MCF 10A (cell line): ENCODE measurements at regions of chr1 and their contacts with region 1.

Region 1: GRCh38 chr1:59699227-59699847 is 115.4 kb upstream of the HOOK1 start:
- DNase-seq: peak; percentile 59
- H3K4me3 Mint-ChIP-seq: no peak overlapping the region
- H3K27ac Mint-ChIP-seq: peak overlapping the region; percentile 57
- H3K4me1 Mint-ChIP-seq: peaks cover 24% of the 10 kb centered on the region
- H3K27me3 Mint-ChIP-seq: no peaks in the 10 kb centered on the region
- CTCF ChIP-seq: peak; percentile 76

Region 2: GRCh38 chr1:58739856-58740466 is 959.4 kb before region 1 on chr1:
- CTCF ChIA-PET with region 1: interaction called, 19 read pairs
- POLR2A ChIA-PET with region 1: no interaction called
- intact Hi-C with region 1: loop called (anchors 1 kb)
- DNase-seq: peak; percentile 69
- H3K4me3 Mint-ChIP-seq: no peak overlapping the region
- H3K27ac Mint-ChIP-seq: no peak overlapping the region
- H3K4me1 Mint-ChIP-seq: peaks cover 6% of the 10 kb centered on the region
- H3K27me3 Mint-ChIP-seq: no peaks in the 10 kb centered on the region
- CTCF ChIP-seq: peak; percentile 54

Region 3: GRCh38 chr1:58922302-58923089 is 776.8 kb before region 1 on chr1:
- CTCF ChIA-PET with region 1: interaction called, 11 read pairs
- POLR2A ChIA-PET with region 1: no interaction called
- intact Hi-C with region 1: loop called (anchors 10 kb)
- DNase-seq: peak; percentile 91
- H3K4me3 Mint-ChIP-seq: peak overlapping the region; percentile 7
- H3K27ac Mint-ChIP-seq: peak overlapping the region; percentile 87
- H3K4me1 Mint-ChIP-seq: peaks cover 52% of the 10 kb centered on the region
- H3K27me3 Mint-ChIP-seq: no peaks in the 10 kb centered on the region
- CTCF ChIP-seq: no peak

Region 4: DNA sequence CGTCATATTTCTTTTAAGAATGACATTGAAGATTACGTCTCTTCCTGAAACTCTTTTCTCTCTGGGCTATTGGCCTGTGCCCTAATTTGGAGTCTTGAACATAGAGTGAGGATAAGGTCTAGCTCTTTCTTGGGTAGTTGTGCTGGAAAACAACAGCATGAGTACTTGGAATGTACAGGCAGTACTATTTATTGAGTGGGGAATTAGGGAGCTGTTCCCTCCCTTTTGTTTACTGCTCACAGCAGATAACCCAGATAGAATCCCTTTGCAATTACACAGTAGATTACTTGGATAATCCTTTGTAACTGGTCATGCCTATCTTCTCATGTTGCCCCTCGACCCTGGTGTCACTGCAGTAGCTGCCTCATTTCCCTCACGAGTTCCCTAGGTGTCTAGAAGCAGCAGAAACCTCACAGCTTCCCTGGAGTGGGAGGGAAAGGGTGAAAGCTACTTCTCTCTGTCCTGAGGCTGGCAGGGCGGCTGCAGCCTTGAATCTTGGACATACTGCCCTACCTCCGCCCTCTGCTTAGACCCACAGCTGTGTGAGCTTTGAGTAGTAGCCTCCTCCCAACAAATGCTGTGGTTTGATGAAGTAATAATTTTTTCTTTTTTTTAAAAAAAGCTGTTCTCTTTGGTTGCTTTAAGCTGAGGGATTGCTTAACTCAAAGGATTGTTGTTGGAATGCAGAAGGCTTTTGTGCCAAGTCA is 331.9 kb before region 1 on chr1:
- CTCF ChIA-PET with region 1: interaction called, 11 read pairs
- POLR2A ChIA-PET with region 1: no interaction called
- intact Hi-C with region 1: no loop called
- DNase-seq: peak; percentile 75
- H3K4me3 Mint-ChIP-seq: peak overlapping the region; percentile 35
- H3K27ac Mint-ChIP-seq: peak overlapping the region; percentile 86
- H3K4me1 Mint-ChIP-seq: peaks cover 42% of the 10 kb centered on the region
- H3K27me3 Mint-ChIP-seq: no peaks in the 10 kb centered on the region
- CTCF ChIP-seq: no peak

Region 5: DNA sequence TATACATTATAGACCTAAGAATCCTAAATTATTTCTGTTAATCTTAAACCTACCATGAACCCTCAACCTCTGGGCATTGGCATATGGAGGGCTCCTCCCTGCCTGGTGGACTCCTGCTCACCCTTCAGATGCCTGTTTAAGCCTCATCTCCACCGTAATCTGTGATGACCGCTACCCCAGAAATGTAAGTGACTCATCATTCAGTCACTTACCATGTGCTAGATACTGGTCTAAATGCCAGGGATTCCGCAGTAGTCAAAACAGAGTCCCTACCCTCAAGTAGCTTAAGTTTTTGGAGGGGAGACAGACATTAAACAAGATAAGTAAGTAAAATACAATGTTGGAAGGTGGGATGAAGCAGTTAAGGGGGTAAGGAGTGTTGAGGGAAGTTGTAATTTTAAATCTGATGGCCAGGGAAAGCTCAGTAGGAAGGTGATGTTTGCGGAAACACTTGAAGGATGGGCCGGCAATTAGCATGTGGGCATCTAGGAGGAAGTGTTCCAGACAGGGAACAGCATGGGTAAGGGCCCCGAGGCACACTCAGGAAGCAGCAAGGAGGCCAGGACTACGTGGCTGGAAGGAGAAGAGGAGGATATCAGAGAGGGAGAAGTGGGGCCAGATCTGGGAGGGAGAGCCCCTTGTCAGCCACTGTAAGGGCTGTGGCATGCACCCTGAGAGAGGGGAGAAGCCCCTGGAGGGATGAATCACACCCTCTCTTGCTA is 26.3 kb before region 1 on chr1:
- CTCF ChIA-PET with region 1: interaction called, 16 read pairs
- POLR2A ChIA-PET with region 1: interaction called, 5 read pairs
- intact Hi-C with region 1: no loop called
- DNase-seq: peak; percentile 77
- H3K4me3 Mint-ChIP-seq: peak overlapping the region; percentile 59
- H3K27ac Mint-ChIP-seq: peak overlapping the region; percentile 94
- H3K4me1 Mint-ChIP-seq: peaks cover 41% of the 10 kb centered on the region
- H3K27me3 Mint-ChIP-seq: no peaks in the 10 kb centered on the region
- CTCF ChIP-seq: no peak